B cell (primary cell): ENCODE measurements at regions of chr1 and their contacts with region 1.

Region 1: GRCh38 chr1:181142096-181142958 is 53.8 kb downstream of the IER5 start:
- DNase-seq: peak; percentile 89
- ATAC-seq: peak; percentile 97
- H3K4me3 ChIP-seq: no peak overlapping the region
- H3K4me3 Mint-ChIP-seq: peak overlapping the region; percentile 69
- H3K27ac ChIP-seq: no peak overlapping the region
- H3K27ac Mint-ChIP-seq: peak overlapping the region; percentile 60
- H3K4me1 ChIP-seq: peaks cover 36 to 41% of the 10 kb centered on the region in 2 donors
- H3K4me1 Mint-ChIP-seq: peaks cover 51% of the 10 kb centered on the region
- H3K27me3 ChIP-seq: no peaks in the 10 kb centered on the region
- H3K27me3 Mint-ChIP-seq: no peaks in the 10 kb centered on the region
- CTCF ChIP-seq: peak; percentile 96

Region 2: DNA sequence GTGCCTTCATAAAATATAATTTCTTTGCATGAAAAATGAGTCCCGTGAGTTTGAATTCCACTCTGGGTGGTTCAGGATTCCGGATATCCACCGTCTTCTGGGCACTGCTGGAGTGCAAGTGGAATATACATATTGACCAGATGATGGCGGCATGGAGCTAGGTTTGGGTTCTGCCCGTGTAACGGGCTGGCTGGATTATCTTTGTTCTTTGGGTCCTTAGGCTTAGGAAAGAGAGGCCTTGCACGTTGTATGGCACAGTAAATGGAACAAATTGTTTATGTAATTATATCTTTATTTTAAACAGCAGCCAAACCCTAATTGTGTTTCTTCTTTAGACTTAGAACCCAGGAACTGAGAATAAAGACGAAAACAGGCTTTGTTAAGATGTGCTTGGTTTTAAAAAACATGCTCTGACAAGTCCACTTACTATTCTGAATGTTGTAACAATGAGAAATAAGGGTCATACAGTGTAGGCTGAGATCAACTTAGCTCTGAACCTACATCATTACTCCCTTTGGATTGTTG is 626.4 kb before region 1 on chr1:
- CTCF ChIA-PET with region 1: no interaction called
- POLR2A ChIA-PET with region 1: no interaction called
- intact Hi-C with region 1: no loop called
- DNase-seq: peak; percentile 72
- ATAC-seq: peak; percentile 88
- H3K4me3 ChIP-seq: no peak overlapping the region
- H3K4me3 Mint-ChIP-seq: no peak overlapping the region
- H3K27ac ChIP-seq: no peak overlapping the region
- H3K27ac Mint-ChIP-seq: no peak overlapping the region
- H3K4me1 ChIP-seq: no peaks in the 10 kb centered on the region
- H3K4me1 Mint-ChIP-seq: peaks cover 2% of the 10 kb centered on the region
- H3K27me3 ChIP-seq: peaks cover 0 to 10% (median 0%) of the 10 kb centered on the region in 4 experiments
- H3K27me3 Mint-ChIP-seq: peaks cover 20% of the 10 kb centered on the region
- CTCF ChIP-seq: peak; percentile 94

Region 3: GRCh38 chr1:180881806-180882509 is 260.4 kb before region 1 on chr1:
- CTCF ChIA-PET with region 1: interaction called, 14 read pairs
- POLR2A ChIA-PET with region 1: no interaction called
- intact Hi-C with region 1: loop called (anchors 2 kb)
- DNase-seq: peak; percentile 37
- ATAC-seq: no peak
- H3K4me3 ChIP-seq: no peak overlapping the region
- H3K4me3 Mint-ChIP-seq: no peak overlapping the region
- H3K27ac ChIP-seq: no peak overlapping the region
- H3K27ac Mint-ChIP-seq: no peak overlapping the region
- H3K4me1 ChIP-seq: no peaks in the 10 kb centered on the region
- H3K4me1 Mint-ChIP-seq: no peaks in the 10 kb centered on the region
- H3K27me3 ChIP-seq: no peaks in the 10 kb centered on the region
- H3K27me3 Mint-ChIP-seq: no peaks in the 10 kb centered on the region
- CTCF ChIP-seq: peak; percentile 47

Region 4: GRCh38 chr1:181062836-181063428 is 79.4 kb before region 1 on chr1:
- CTCF ChIA-PET with region 1: interaction called, 33 read pairs
- POLR2A ChIA-PET with region 1: no interaction called
- intact Hi-C with region 1: no loop called
- DNase-seq: no peak
- ATAC-seq: peak; percentile 53
- H3K4me3 ChIP-seq: peak overlapping the region in 4 of 5 experiments; percentile 15 to 53 (median 38)
- H3K4me3 Mint-ChIP-seq: peak overlapping the region; percentile 81
- H3K27ac ChIP-seq: peak overlapping the region; percentile 76 to 78
- H3K27ac Mint-ChIP-seq: peak overlapping the region; percentile 95
- H3K4me1 ChIP-seq: peaks cover 19 to 27% of the 10 kb centered on the region in 2 donors
- H3K4me1 Mint-ChIP-seq: peaks cover 31% of the 10 kb centered on the region
- H3K27me3 ChIP-seq: no peaks in the 10 kb centered on the region
- H3K27me3 Mint-ChIP-seq: no peaks in the 10 kb centered on the region
- CTCF ChIP-seq: no peak

Region 5: DNA sequence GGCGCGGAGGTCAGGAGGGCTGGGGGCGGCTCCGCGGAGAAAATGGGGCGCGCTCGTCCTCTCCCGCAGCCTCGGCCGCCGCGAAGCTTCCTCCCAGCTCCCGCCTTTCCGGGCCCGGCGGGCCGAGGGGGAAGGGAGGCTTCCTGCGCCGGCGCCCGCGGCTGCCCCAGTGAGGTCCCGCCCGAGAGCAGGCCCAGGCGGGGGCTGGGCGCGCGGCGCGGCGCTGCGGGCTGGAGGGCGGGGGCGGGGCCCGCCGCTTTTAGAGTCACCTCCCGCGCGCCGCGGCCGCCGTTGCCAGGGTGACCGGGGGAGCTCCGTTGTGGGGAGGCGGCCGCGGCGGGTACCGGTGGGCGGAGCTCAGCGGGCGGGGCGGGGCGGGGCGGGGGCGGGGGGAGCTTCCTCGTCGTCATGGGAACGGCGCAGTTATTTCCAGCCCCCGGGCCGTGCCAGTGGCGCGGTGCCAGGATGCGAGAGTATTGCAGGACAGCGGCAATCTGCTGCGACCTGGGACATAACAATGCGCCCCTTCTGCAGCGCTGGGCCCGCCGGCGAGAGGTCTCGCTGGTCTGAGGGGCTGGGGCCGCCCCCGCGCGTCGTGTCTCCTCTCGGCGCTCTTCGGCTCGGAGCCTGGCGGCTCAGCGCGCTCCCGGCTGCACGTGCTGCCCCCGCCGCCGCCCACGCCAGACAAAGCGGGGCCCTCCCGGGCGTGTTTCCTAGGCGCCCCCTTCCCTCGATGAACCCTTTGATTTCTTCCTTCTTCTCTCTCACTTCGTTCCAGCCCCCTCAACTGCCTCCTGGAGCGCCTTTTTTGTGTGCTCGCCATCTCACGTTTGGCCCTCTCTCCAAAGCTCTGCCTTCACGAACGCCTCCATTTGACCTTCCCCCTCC is 36.9 kb before region 1 on chr1:
- CTCF ChIA-PET with region 1: interaction called, 125 read pairs
- POLR2A ChIA-PET with region 1: interaction called, 9 read pairs
- intact Hi-C with region 1: loop called (anchors 1 kb)
- DNase-seq: peak; percentile 94
- ATAC-seq: peak; percentile 86
- H3K4me3 ChIP-seq: peak overlapping the region in 4 of 5 experiments; percentile 78 to 87 (median 83)
- H3K4me3 Mint-ChIP-seq: peak overlapping the region; percentile 90
- H3K27ac ChIP-seq: peak overlapping the region; percentile 66 to 85
- H3K27ac Mint-ChIP-seq: peak overlapping the region; percentile 87
- H3K4me1 ChIP-seq: peaks cover 16 to 23% of the 10 kb centered on the region in 2 donors
- H3K4me1 Mint-ChIP-seq: peaks cover 37% of the 10 kb centered on the region
- H3K27me3 ChIP-seq: no peaks in the 10 kb centered on the region
- H3K27me3 Mint-ChIP-seq: no peaks in the 10 kb centered on the region
- CTCF ChIP-seq: no peak

Region 6: DNA sequence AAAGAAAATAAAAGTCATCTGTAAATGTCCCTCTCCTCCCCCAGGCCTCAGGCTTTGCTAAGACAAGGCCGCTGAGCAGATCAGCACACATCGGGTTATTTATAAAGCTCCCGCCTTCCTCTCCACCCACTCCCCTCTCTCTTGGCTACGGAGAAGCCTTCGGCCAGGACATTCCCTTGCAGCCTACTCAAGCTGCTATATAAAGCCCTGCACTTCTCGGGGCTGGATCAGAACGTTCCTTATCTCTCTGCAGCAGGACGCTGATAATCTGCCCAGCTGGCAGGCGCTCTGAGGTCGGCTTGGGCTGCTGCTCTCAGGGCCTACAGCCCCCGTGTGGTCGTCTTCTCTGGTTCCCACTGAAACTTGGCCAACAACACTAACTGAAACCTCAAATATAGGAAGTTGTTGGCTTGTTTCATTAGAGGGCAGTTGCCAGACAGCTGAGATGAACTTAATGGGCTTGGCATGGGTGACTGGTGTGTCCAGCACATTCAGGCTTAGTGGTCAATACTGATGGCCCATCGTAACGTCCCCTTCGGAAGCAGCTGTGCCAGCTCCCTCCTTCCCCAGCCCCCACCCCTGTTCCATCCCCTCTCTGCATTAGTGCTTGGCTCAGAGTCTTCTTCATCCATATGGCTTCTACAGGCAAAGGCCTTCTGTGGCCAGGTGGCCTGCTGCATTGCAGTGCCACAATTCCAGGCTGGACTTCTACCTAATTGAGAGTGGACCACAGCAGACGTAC is 10.7 kb after region 1 on chr1:
- CTCF ChIA-PET with region 1: interaction called, 76 read pairs
- POLR2A ChIA-PET with region 1: no interaction called
- intact Hi-C with region 1: loop called (anchors 1 kb)
- DNase-seq: peak; percentile 80
- ATAC-seq: peak; percentile 87
- H3K4me3 ChIP-seq: no peak overlapping the region
- H3K4me3 Mint-ChIP-seq: peak overlapping the region; percentile 54
- H3K27ac ChIP-seq: no peak overlapping the region
- H3K27ac Mint-ChIP-seq: peak overlapping the region; percentile 39
- H3K4me1 ChIP-seq: peaks cover 35 to 45% of the 10 kb centered on the region in 2 donors
- H3K4me1 Mint-ChIP-seq: peaks cover 49% of the 10 kb centered on the region
- H3K27me3 ChIP-seq: no peaks in the 10 kb centered on the region
- H3K27me3 Mint-ChIP-seq: no peaks in the 10 kb centered on the region
- CTCF ChIP-seq: peak; percentile 56